Activated CD4-positive, alpha-beta T cell treated with anti-CD3 and anti-CD28 coated beads, Interleukin-2, amount 10 ng/mL, durations not matched to agents 24 days and 14 days (primary cell): ENCODE measurements at regions of chr7 and their contacts with region 1.

Region 1: GRCh38 chr7:152463709-152464311 is 28.0 kb upstream of the KMT2C start:
- DNase-seq: peak; percentile 100
- H3K4me3 Mint-ChIP-seq: peak overlapping the region; percentile 97
- H3K27ac Mint-ChIP-seq: peak overlapping the region; percentile 69
- H3K4me1 Mint-ChIP-seq: peaks cover 12% of the 10 kb centered on the region
- H3K27me3 Mint-ChIP-seq: peaks cover 1% of the 10 kb centered on the region

Region 2: DNA sequence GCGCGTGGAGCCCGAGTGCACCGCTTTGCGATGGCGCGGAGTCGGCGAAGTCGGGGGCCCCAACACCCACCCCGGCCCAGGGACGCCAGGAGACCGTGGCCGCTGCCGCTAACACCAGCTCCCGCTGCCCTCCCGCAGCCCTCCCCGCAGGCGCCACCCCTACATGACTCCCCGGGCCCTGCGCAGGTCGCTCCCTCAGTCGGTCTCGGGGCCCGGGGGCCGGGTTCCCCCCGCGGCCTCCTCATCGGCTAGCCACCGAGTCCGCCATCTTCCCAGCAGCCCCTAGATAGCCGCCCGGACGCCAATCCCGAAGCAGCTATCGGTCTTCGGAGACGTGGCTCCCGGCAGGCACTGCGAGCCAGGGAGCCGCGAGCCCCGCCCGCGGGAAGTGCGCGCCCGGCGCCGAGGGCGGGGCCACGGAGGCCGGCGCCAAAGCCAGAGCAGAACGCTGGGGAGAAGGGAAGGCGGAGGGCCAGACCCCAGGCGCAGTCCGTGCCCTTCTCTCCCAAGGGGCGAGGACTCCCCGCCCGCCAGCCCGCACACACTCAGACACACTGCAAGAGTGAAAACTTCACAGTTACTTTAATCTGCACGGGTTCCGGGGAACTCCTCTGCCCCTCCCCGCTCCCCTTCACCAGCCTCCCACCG is 1383.2 kb before region 1 on chr7 and contains the start of gene FASTK:
- intact Hi-C with region 1: loop called (anchors 10 kb)
- DNase-seq: peak; percentile 97
- H3K4me3 Mint-ChIP-seq: peak within 1 kb of the TSS; percentile 95
- H3K27ac Mint-ChIP-seq: peak within 1 kb of the TSS; percentile 82
- H3K4me1 Mint-ChIP-seq: peaks cover 30% of the 10 kb centered on the region
- H3K27me3 Mint-ChIP-seq: peaks cover 9% of the 10 kb centered on the region
- total RNA-seq, gene FASTK: 90.8 and 92.3 TPM in 2 replicates

Region 3: DNA sequence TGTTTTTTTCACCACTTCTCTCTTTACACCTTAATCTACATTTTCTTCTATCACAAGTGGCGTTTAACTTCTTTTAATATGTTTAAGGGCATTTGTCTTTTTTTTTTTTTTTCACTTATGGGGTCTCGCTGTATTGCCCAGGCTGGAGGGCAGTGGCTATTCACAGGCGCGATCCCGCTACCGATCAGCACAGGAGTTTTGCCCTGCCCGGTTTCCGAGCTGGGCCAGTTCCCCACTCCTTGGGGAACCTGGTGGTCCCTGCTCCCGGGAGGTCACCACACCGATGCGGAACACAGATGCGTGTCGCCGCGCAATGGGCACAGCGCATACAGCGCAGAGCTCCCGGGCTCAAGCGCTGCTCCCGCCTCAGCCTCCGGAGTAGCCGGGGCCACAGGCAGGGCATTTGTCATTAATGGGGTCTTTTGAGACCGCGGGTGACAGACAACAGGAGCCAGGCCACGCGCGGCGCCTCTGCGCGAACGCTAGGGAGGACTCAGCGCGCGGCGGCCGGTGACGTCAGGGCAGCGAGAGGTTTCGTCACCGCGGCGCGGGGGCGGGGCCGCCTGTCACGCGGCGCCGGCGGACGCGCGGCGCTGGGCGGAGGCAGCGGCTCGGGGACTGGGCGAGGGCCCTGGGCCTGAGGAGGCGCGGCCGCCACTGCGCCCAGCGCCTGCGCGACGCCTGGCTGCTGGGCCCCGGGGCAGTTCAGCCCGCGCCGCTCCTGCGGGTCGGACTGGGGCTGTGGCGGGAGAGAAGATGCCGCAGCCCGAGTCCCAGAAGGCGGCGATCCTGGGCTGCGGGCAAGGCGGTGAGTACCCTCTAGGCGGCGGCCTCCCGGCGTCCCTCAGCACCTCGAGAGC is 438.5 kb before region 1 on chr7 and contains the start of gene GALNT11:
- intact Hi-C with region 1: loop called (anchors 1 kb)
- DNase-seq: peak; percentile 97
- H3K4me3 Mint-ChIP-seq: peak within 1 kb of the TSS; percentile 88
- H3K27ac Mint-ChIP-seq: peak within 1 kb of the TSS; percentile 85
- H3K4me1 Mint-ChIP-seq: peaks cover 23% of the 10 kb centered on the region
- H3K27me3 Mint-ChIP-seq: peaks cover 16% of the 10 kb centered on the region
- total RNA-seq, gene GALNT11: 22.0 and 22.1 TPM in 2 replicates

Region 4: DNA sequence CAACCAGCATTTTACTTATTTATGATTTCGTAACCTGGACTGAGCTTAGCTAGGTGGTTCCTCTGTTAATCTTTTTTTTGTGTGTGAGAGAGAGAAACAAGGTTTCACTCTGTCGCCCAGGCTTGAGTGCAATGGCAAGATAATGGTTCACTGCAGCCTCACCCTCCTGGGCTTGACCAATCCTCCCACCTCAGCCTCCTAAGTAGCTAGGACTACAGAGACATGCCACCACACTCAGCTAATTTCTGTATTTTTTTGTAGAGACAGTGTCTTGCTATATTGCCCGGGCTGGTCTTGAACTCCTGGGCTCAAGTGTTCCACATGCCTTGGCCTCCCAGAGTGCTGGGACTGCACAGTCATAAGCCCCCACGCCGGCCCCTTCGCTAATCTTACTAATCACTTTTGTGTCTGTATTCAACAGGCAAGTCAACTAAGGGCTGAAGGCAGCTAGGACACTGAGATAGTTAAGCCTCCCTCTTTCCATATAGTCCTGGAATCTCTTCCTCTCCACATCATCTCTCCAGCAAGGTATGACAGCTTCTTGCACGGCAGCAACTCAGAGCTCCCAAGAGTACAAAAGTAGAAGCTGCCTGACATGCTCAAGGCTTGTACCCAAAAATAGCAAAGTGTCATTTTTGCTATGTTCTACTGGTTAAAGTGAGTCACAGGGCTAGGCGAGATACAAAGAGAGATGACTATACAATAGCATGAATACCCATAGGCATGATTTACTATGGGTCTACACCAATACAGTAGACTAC is 39.3 kb before region 1 on chr7:
- intact Hi-C with region 1: loop called (anchors 5 kb)
- DNase-seq: no peak
- H3K4me3 Mint-ChIP-seq: no peak overlapping the region
- H3K27ac Mint-ChIP-seq: peak overlapping the region; percentile 51
- H3K4me1 Mint-ChIP-seq: peaks cover 39% of the 10 kb centered on the region
- H3K27me3 Mint-ChIP-seq: no peaks in the 10 kb centered on the region

Region 5: GRCh38 chr7:152451356-152452150 is 12.3 kb before region 1 on chr7:
- intact Hi-C with region 1: no loop called
- DNase-seq: no peak
- H3K4me3 Mint-ChIP-seq: no peak overlapping the region
- H3K27ac Mint-ChIP-seq: no peak overlapping the region
- H3K4me1 Mint-ChIP-seq: no peaks in the 10 kb centered on the region
- H3K27me3 Mint-ChIP-seq: no peaks in the 10 kb centered on the region

Region 6: DNA sequence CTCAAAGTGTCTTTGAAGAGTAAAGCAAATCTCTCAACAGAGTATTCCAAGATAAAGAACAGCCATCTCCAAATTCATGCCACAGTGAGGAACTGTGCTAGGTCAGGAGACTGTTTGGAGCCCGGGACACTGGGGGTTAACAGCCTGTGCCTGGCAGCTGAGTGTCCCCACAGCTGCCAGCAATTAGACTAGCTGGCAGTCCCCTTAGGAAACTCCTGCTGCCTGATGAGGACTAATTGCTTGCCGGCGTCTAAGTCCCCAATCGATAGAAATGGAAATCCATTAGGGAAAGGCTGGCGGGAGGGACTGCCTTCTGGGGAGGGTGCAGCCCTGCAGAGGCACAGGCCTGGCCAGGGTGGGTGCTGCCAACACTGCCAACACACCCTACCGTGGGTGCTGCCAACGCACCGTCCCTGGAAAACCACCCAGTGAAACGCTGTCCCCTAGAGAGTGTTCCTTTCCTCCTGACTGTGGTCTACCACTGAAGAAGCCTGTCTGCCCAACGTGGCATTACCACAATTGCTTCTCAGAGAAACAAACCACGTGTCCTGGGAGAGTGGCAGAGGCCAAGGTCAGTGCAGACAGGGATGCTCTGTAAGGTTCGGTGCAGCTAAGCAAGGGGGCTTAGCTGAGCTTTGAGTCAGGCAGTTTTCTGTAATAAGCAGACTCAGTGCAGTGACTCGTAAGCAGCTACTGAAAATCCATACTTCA is 151.4 kb after region 1 on chr7:
- intact Hi-C with region 1: no loop called
- DNase-seq: no peak
- H3K4me3 Mint-ChIP-seq: no peak overlapping the region
- H3K27ac Mint-ChIP-seq: no peak overlapping the region
- H3K4me1 Mint-ChIP-seq: no peaks in the 10 kb centered on the region
- H3K27me3 Mint-ChIP-seq: no peaks in the 10 kb centered on the region

Region 7: DNA sequence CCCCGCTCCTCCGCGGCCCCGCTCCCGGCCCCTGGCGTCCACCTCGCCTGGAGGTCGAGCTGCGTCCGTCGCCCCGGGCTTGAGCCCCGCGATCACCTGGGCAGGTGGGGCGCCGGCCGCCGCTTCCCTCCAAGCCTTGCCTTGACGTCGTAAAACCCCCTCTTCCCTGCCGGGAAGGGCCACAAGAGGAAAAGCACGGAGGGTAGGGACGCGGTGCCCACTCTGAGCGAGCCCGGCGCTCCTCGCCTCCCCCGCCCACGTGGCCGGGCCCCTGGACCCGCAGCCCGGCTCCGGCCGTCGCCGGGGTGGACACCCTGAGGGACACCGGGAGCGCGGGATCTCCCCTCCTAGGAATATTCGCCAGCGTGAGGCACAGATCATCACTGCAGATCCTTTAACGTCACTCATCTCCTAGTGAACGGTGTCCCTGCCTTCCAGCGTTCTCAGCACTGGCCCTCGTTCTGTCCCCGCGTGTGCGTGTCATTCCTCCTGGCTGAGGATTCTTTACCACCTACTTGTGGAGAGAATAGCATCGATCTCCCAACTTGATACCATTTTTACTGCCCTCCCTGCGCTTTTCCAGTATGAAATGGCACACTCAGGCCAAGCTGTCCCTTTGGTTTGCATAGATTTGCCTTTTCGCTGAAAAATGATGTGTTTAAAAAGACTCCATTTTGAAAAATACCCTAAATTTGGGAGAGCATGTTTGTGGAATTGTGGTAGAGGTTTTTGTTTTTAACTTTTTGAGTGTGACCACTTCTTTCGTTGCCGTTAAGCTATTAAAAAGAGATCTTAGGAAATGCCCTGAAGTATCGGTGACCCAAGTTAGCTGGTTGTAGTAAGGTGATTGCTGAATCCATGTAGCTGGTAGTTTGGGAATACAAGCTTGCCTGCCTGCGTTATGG is 296.4 kb after region 1 on chr7:
- intact Hi-C with region 1: loop called (anchors 1 kb)
- DNase-seq: no peak
- H3K4me3 Mint-ChIP-seq: peak overlapping the region; percentile 81
- H3K27ac Mint-ChIP-seq: peak overlapping the region; percentile 54
- H3K4me1 Mint-ChIP-seq: peaks cover 13% of the 10 kb centered on the region
- H3K27me3 Mint-ChIP-seq: peaks cover 4% of the 10 kb centered on the region